ENCODE measurements at regions of chr2 and their contacts with region 1.

Region 1: DNA sequence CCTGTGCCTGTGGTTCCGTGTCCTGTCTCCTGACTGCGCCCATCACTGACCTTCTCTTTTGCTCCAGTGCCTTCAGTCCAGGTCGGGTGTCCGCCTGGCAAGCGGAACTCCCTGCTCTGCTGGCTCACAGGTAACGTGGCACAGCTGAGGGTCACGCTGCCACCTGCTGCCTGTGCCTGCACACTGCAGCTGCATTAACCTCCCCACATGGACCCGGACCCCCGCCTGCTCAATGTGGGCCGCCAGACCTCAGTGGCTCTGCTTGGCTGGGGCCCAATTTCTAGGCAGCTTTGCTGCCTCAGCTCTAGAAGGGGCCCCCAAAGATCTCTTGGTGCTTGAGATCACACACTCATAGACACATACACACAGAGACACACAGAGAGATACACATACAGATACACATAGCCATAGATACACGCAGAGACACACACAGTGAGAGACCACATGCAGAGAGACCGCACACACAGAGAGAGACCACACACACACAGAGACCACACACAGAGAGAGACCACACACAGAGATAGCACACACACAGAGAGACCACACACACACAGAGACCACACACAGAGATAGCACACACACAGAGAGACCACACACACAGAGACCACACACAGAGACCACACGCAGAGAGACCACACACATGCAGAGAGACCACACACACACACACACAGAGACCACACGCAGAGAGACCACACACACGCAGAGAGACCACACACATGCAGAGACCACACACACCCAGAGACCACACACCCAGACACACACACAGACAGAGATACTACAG is 14.9 kb upstream of the CNNM3 start:
- DNase-seq: peak; percentile 80 to 90
- ATAC-seq: peak; percentile 86
- H3K4me3 ChIP-seq: no peak overlapping the region
- H3K27ac ChIP-seq: no peak overlapping the region
- H3K4me1 ChIP-seq: no peaks in the 10 kb centered on the region
- H3K27me3 ChIP-seq: no peaks in the 10 kb centered on the region

Region 2: DNA sequence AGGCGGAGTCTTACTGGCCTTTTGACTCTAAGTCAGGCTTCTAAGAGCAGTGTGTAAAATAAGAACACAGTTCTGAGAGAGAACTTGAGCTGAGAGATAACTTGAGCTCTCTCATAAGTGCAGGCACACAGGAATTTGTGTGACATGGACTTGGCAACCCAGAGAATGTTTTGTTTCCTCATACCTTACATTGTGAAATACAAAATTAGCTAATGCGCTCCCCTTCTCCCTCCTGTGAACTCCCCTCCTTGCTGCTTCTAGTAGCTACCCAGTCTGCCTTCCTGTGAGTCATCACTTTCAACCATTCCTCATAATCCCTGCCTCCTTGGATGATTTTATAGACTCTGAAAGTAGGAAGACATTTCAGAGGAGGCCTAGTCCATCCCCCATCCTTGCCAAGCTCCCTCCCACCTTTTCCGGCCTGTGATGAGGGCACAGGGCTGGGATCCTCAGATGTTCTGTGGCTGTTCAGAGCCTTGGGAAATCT is 136.1 kb before region 1 on chr2:
- intact Hi-C with region 1: no loop called
- DNase-seq: peak; percentile 79 to 82
- ATAC-seq: peak; percentile 82
- H3K4me3 ChIP-seq: no peak overlapping the region
- H3K27ac ChIP-seq: peak overlapping the region in 1 of 2 donors; percentile 88
- H3K4me1 ChIP-seq: no peaks in the 10 kb centered on the region
- H3K27me3 ChIP-seq: no peaks in the 10 kb centered on the region

Region 3: DNA sequence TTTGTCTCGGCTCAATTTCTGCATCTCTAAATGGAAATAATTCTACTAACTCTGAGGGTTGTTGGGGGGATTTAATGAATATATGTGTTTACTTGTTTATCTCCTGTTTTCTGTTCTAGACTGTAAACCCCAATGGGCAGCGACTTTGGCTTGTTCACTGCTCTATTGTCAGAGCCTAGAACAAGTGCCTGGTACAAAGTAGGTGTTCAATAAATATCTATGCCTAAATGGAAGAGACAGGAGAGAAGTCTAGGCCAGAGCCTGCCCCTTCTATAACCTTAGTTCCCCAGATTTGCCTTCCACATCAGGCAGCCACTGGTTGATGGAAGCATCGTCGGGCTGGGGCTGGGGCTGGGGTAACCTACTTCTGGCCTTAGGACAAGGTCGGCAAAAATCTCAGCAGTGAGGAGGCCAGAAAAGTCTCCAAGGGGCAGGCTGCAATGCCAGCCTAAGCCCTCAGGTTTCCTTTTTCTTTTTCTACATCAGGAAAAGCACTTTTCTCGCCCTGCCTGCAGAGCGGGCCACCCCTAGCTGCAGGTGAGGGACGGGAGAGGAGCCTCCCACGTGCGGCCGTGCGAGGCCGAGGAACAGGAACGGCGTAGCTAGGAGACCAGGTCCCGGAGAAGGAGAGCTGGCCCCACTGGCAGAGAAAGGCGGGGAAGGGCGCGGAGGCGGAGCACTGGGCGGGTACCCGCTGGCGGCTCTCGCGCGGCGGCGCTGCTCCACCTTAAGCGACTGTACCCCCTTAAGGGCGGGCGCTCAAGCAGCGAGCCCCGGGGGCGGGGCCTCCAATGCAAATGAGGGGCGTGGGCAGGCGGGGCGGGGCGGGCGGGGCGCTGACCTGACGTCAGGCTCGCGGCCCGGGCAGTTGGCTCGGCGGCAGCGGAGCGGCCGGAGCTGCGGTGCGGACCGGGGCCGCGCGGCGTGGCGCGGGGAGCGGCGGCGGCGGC is 40.9 kb before region 1 on chr2 and contains the start of gene CNNM4:
- intact Hi-C with region 1: loop called in 1 of 2 experiments (anchors 5 kb)
- DNase-seq: peak; percentile 97 to 98
- ATAC-seq: peak; percentile 95
- H3K4me3 ChIP-seq: peak within 1 kb of the TSS; percentile 3 to 72
- H3K27ac ChIP-seq: peak within 1 kb of the TSS in 1 of 2 donors; percentile 22
- H3K4me1 ChIP-seq: peaks cover 0 to 5% of the 10 kb centered on the region in 2 donors
- H3K27me3 ChIP-seq: peaks cover 0 to 1% of the 10 kb centered on the region in 2 donors
- total RNA-seq, gene CNNM4: 7.8 to 8.1 TPM

Region 4: GRCh38 chr2:96788442-96789244 is 12.6 kb before region 1 on chr2:
- intact Hi-C with region 1: loop called in 1 of 2 experiments (anchors 1 kb)
- DNase-seq: peak; percentile 70 to 87
- ATAC-seq: peak; percentile 84
- H3K4me3 ChIP-seq: no peak overlapping the region
- H3K27ac ChIP-seq: peak overlapping the region in 1 of 2 donors; percentile 44
- H3K4me1 ChIP-seq: peaks cover 0 to 2% of the 10 kb centered on the region in 2 donors
- H3K27me3 ChIP-seq: no peaks in the 10 kb centered on the region

Measured in aorta (tissue), 5 donors.